HEK293T (cell line): ENCODE measurements at regions of chr19 and their contacts with region 1.

Region 1: DNA sequence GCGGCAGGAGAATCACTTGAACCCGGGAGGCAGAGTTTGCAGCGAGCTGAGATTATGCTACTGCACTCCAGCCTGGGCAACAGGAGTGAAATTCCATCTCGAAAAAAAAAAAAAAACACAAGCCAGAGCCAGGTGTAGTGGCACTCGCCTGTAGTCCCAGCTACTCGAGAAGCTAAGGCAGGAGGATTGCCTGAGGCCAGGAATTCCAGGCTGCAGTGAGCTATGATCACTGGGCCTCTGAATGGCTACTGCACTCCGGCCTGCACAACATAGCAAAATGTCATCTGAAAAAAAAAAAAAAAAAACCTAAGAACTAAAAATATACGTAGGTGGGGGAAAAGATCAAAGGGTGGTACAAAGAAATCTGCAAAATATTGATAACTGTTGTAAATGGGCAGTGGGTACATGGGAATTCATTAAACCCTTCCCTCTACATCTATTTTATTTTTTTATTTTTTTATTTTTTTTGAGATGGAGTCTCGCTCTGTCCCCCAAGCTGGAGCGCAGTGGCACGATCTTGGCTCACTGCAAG is 19.4 kb downstream of the EPS15L1 start:
- DNase-seq: no peak

Region 2: DNA sequence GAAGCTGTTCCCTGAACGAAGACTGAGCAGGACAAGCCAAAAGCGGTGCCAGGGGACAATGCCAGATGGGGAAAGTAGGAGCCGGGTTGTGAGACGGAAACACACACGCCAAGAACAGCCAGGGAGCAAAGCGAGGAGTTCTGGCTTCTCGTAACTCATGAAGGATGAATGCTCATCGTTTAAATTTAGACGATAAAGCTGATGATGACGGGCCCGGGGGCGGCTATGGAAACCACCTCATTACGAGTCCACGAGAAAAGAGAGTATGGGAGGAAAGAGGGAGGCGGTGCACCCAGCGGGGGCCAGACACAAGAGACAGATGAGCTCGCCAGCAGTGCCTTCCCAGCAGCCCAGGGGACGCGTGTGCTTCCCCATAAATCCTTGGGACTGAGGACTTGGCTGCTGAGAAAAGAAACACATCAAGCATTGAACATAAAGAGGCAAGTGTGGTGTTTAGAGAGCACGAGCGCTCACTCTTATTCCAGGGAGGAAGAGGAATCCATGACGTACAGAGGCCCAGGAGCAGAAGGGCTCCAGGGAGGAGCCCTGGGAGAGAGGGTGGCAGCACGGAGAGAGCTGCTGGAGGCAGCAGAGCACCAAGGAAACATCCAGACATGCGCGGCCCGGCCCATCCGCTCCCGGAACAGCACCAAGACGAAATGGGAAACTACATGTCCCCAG is 51.4 kb before region 1 on chr19:
- CTCF ChIA-PET with region 1: no interaction called
- POLR2A ChIA-PET with region 1: no interaction called
- DNase-seq: no peak

Region 3: DNA sequence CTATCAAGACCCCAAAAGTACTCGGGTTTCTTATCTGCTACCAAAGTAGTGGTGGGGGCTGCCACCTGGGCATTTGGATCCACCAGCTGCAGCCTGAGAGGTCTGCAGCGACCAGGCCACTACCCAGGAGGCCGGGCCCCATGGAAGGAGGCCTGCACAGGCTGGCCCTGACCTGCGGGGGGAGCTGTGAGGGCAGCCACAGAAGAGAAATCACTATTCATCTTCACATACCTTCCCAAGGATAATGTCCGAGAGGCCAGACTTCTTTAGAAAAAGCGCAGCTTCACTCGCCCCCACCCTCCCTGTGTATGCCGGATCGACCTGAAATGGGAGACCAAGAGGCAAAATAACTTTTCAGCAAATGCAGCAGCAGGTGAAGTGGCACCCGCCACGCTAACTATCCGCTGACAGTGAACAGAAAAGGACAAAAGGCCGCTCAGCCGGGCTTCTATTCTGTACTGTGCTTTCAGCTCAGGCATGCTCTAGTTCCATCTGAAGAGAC is 10.7 kb before region 1 on chr19:
- CTCF ChIA-PET with region 1: interaction called, 10 read pairs
- POLR2A ChIA-PET with region 1: no interaction called
- DNase-seq: peak; percentile 72

Region 4: GRCh38 chr19:16470911-16471811 is 18.7 kb after region 1 on chr19:
- CTCF ChIA-PET with region 1: no interaction called
- POLR2A ChIA-PET with region 1: no interaction called
- DNase-seq: no peak

Region 5: DNA sequence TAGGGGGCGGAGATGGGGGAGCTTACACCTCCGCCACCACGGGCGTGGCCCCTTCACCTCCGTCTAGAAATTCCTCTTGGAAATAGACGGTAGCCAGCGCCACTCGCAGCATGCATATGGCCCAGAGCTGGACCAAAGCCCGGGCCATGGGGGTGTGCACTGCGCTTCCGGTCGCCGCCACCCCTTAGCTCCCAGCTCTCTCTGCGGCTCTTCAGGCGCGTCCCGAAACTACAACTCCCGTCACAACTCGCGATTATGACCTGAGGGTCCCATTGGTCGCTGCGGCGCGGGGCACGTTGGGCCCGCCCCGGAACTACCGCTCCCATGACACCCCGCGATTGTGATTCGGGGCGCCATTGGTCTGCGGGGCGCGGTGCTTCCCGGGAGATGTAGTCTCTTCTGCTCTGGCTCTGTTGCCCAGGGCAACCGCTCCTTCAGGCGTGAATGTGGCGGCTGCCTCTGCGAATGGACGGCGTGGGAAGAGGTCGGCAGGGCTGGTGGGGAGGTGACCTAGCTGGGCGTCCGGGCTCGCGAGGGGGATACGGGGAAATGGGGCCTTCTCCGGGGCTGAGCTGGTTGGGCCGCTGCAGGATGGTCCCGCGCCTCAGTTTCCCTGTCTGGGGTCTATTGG is 43.7 kb after region 1 on chr19 and contains the starts of genes C19orf44 and CALR3:
- CTCF ChIA-PET with region 1: no interaction called
- POLR2A ChIA-PET with region 1: interaction called, 11 read pairs
- DNase-seq: peak; percentile 99